Gastrocnemius medialis (tissue), 4 donors: ENCODE measurements at regions of chr15 and their contacts with region 1.

Region 1: DNA sequence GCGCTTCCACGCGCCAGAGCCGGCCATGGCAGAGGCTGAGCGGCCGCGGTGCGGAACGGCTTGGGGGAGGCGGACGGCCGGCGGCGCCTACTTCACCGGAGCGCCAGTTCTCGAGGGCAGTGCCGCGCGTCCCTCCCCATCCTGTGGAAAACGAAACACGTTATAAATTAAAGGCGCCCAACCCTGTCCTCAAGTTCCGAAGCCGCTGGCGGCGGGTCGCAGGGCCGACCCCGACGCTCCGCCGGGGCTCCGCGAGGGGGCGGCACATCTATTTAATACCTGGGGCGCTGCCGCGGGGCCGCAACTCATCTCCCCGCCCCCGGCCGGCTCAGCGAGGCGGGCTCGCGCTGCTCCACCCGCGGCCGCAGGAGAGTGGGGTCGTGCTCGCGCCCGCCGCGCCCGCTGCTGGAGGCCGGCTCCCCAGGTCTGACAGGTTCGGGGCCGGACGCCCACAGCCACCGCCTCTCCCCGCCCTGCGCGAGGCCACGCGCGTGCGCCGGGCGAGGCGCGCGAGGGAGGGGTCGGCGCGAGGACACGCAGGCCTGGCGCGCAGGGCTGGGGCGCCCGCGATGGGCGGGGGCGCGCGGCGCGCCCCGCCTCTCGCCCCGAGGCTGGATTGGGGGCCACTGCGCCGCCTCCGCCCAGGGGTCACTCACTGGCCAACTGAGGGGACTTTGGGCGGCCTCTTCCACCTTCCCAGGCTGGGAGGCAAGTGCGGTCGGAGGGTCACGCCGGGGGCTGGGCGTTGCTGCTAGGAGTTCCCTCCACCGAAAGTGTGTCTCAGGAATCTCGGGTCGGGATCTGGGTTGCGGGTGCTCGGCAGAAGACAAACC is at the start of gene SLC30A4:
- DNase-seq: peak; percentile 20 to 46
- ATAC-seq: peak; percentile 87 to 88
- H3K4me3 ChIP-seq: peak within 1 kb of the TSS; percentile 69 to 86 (median 78)
- H3K27ac ChIP-seq: peak within 1 kb of the TSS; percentile 78 to 81 (median 80)
- H3K4me1 ChIP-seq: peaks cover 14 to 17% of the 10 kb centered on the region in 2 donors
- H3K27me3 ChIP-seq: no peaks in the 10 kb centered on the region
- CTCF ChIP-seq: peak in 4 of 5 experiments; percentile 6 to 54 (median 46)
- POLR2A ChIP-seq: peak; percentile 57 to 62
- total RNA-seq, gene SLC30A4: 1.4 to 2.3 (median 1.7) TPM

Region 2: GRCh38 chr15:45587095-45587860 is 64.7 kb after region 1 on chr15 and contains the start of gene BLOC1S6:
- in situ Hi-C with region 1: no loop called
- intact Hi-C with region 1: loop called (anchors 1 kb)
- DNase-seq: peak; percentile 78 to 82
- ATAC-seq: peak; percentile 96
- H3K4me3 ChIP-seq: peak within 1 kb of the TSS; percentile 87 to 98 (median 92)
- H3K27ac ChIP-seq: peak within 1 kb of the TSS; percentile 95 to 100 (median 97)
- H3K4me1 ChIP-seq: peaks cover 33 to 37% of the 10 kb centered on the region in 2 donors
- H3K27me3 ChIP-seq: no peaks in the 10 kb centered on the region
- CTCF ChIP-seq: peak in 1 of 5 experiments; percentile 15
- POLR2A ChIP-seq: peak; percentile 68 to 72
- total RNA-seq, gene BLOC1S6: 32.9 to 38.2 (median 36.6) TPM

Region 3: DNA sequence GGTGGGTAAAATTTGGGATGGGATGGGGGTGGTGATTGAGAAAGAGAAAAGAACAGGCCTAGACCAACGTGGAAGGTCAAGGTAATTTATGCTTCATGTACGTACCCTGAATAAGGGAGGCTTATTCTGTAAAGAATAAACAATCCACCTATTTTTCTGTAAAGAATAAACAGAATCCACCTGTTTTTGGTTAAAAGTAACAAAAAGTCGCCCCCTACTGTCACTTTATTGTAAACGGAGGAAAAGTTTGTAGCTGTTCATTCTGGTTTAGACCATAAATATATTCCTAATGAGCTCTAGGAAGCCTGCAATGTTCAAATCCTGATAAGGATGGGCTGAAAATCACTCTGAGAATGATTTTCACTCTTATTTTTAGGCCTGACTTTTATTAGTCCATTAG is 88.8 kb after region 1 on chr15:
- in situ Hi-C with region 1: loop called in 1 of 4 experiments (anchors 10 kb)
- intact Hi-C with region 1: loop called (anchors 1 kb)
- DNase-seq: no peak
- ATAC-seq: no peak
- H3K4me3 ChIP-seq: no peak overlapping the region
- H3K27ac ChIP-seq: no peak overlapping the region
- H3K4me1 ChIP-seq: no peaks in the 10 kb centered on the region
- H3K27me3 ChIP-seq: no peaks in the 10 kb centered on the region
- CTCF ChIP-seq: peak in 1 of 5 experiments; percentile 11
- POLR2A ChIP-seq: no peak